Sigmoid colon (tissue), 7 donors: ENCODE measurements at regions of chr15 and their contacts with region 1.

Region 1: DNA sequence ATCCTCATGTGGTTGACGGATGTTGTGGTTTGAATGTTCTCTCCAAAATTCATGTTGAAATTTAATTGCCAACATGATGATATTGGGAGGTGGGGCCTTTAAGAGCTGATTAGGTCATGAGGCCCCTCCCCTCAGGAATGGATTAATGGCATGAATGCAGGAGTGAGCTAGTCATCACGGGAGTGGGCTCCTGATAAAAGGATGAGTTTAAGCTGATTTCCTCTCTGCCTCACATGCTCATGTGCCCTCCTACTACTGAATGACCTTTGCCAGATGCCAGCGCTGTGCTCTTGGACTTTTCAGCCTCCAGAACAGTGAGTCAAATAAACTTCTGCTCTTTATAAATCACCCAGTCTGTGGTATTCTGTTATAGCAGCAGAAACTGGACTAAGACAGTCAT is 111.2 kb downstream of the MYO5A start:
- DNase-seq: no peak
- H3K4me3 ChIP-seq: no peak overlapping the region
- H3K27ac ChIP-seq: no peak overlapping the region
- H3K4me1 ChIP-seq: no peaks in the 10 kb centered on the region
- H3K27me3 ChIP-seq: no peaks in the 10 kb centered on the region
- CTCF ChIP-seq: no peak
- EP300 ChIP-seq: no peak
- POLR2A ChIP-seq: no peak

Region 2: DNA sequence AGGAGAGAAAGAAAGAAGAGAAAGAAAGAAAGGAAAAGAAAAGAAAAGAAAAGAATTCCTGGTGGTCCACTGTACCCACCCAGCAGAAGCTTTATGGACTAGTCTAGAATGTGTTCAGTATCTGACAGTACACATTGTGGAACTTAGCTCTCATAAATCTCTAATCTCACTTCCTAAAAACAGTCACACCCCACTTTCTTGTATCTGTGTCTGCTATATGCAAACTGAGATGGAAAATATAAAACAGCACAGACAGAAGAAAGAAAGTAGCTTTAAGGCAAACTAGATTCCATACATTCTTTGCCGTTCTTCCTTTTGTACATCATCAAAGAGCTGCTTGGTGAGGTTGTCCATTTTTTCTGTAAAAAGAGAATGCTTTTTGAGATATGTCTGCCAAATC is 185.2 kb before region 1 on chr15:
- intact Hi-C with region 1: no loop called
- DNase-seq: no peak
- H3K4me3 ChIP-seq: no peak overlapping the region
- H3K27ac ChIP-seq: no peak overlapping the region
- H3K4me1 ChIP-seq: no peaks in the 10 kb centered on the region
- H3K27me3 ChIP-seq: no peaks in the 10 kb centered on the region
- CTCF ChIP-seq: no peak
- EP300 ChIP-seq: no peak
- POLR2A ChIP-seq: no peak

Region 3: DNA sequence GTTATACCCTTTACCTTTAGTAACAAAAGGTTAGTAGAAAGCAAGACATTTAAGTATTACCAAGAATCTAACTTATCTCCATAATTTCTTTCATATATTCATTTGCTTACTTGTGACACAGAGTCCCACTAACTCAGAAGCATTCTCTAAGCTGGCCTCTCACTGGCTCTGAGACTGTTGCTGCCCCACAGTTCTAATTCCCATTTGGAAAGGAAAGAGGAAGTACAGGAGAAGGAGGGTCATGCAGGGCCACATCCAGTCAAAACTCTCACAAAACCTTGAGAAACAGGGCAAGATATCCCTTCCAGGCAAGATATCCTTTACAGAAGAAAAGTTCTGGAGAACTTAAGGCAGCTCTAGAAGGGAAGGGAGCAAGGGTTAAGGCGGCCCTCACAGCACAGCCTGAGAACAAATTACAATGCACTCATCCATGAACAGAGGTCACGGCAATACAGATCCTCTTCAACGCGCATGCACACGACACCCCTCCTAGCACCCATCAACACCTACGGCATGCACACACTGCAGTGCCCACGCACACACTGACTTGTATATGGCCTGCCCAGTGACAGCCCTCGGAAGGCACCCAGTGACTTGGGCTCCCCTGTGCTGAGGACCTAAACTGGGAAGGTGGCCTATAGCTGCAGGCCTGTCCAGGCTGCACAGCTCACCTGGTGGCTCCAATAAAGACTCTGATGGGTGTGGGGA is 108.9 kb before region 1 on chr15:
- intact Hi-C with region 1: no loop called
- DNase-seq: no peak
- H3K4me3 ChIP-seq: no peak overlapping the region
- H3K27ac ChIP-seq: no peak overlapping the region
- H3K4me1 ChIP-seq: no peaks in the 10 kb centered on the region
- H3K27me3 ChIP-seq: no peaks in the 10 kb centered on the region
- CTCF ChIP-seq: no peak
- EP300 ChIP-seq: no peak
- POLR2A ChIP-seq: no peak

Region 4: DNA sequence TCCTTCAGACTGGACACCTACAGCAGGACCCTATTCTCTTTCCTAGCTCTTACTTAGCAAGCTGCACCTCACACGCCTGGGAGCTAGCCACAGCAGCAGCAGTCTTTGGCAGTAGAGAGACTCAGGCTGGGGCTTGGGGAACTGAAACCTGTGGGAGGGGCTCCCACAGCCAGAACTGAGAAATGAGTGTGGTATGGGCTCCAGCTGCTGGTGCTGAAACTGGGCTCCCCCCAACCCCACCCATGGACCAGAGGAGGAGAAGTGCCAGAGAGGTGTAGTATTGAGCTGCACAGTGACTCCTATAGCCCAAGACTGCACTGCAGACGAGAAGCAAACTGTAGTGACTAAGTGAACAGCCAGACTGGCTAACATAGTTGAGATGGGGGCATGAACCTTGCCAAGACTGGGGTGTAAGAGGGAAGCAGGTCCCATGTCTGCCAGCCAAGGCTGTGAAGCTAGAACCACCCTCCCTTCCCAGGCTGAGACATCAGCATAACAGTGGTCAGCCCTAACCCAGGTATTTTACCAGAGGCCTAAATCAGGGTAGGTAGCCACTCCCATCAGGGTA is 48.7 kb after region 1 on chr15:
- intact Hi-C with region 1: loop called (anchors 10 kb)
- DNase-seq: peak; percentile 68
- H3K4me3 ChIP-seq: no peak overlapping the region
- H3K27ac ChIP-seq: no peak overlapping the region
- H3K4me1 ChIP-seq: peaks cover 0 to 18% (median 0%) of the 10 kb centered on the region in 4 donors
- H3K27me3 ChIP-seq: no peaks in the 10 kb centered on the region
- CTCF ChIP-seq: no peak
- EP300 ChIP-seq: no peak
- POLR2A ChIP-seq: no peak

Region 5: DNA sequence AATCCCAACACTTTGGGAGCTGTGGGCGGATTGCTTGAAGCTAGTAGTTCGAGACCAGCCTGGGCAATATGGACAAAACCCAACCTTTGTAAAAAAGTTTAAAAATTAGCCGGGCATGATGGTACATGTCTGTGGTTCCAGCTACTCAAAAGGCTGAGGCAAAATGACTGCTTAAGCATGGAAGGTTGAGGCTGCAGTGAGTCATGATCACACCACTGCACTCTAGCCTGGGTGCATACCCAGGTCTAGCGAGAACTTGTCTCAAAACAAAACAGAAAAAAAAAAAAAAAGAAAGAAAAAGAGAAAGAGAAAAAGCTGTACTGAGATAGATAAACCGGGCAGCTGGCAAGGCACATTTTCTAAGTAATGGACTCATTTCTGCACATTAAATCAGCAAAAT is 140.7 kb after region 1 on chr15:
- intact Hi-C with region 1: no loop called
- DNase-seq: no peak
- H3K4me3 ChIP-seq: no peak overlapping the region
- H3K27ac ChIP-seq: no peak overlapping the region
- H3K4me1 ChIP-seq: peaks cover 0 to 76% (median 67%) of the 10 kb centered on the region in 4 donors
- H3K27me3 ChIP-seq: no peaks in the 10 kb centered on the region
- CTCF ChIP-seq: no peak
- EP300 ChIP-seq: no peak
- POLR2A ChIP-seq: no peak